ENCODE measurements at regions of chr5 and their contacts with region 1.

Region 1: GRCh38 chr5:181207214-181208107 is 2.5 kb upstream of the TRIM7 start:
- DNase-seq: peak in 9 of 10 donors; percentile 65 to 95 (median 76)

Region 2: GRCh38 chr5:181008136-181008535 is 199.3 kb before region 1 on chr5:
- intact Hi-C with region 1: no loop called
- DNase-seq: no peak

Region 3: DNA sequence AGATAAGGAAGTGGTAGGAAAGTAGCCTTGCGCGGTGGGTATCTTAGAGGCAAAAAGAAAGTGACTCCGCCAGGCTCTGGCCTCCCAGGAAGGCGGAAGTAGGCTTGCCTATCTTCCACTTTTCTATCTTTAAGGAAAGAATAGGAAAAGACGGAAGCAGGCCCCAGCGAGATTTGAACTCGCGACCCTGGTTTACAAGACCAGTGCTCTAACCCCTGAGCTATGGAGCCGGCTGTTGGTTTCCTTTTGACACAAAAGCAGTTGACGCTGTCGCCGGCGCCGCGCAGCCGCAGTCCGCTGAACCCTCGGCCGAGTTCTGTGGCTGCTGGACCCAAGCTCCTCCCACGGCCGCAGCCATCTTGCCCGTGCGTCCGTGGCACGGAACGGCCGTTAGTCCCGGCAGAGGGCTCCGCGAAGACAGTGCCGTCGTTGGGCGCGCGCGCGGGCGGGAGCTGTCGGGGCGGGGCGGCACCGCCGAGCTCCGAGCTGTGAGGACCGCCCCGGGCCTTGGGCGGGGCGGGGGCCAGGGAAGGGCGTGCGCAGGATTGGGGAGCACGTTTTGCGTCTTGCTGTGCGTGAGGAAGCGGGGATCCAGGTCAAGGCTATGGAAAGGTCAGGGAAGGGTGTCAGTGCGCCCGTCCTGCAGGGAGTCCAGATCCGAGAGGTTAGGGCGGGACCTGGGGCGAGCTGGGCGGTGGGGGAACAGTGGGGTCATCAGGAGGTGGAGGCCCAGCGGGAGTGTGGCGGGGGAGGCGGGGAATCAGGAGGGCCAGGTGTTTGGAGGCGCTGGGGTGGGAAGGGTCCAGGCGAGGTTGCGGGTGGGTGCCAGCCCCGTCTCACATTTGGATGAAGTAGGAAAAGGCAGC is 15.7 kb before region 1 on chr5:
- intact Hi-C with region 1: loop called (anchors 2 kb)
- DNase-seq: peak; percentile 91 to 99 (median 94)

Region 4: GRCh38 chr5:181217803-181218062 is 10.3 kb after region 1 on chr5:
- intact Hi-C with region 1: loop called (anchors 1 kb)
- DNase-seq: peak in 2 of 10 donors; percentile 25 to 82

Measured in posterior cingulate gyrus (tissue), 11 donors.